ENCODE measurements at regions of chr4 and their contacts with region 1.

Region 1: GRCh38 chr4:140427106-140427961 is at the start of gene CLGN:
- DNase-seq: peak; percentile 91
- ATAC-seq: peak; percentile 95
- H3K4me3 Mint-ChIP-seq: peak within 1 kb of the TSS; percentile 82
- H3K27ac Mint-ChIP-seq: no peak within 1 kb of the TSS
- H3K4me1 Mint-ChIP-seq: peaks cover 11% of the 10 kb centered on the region
- H3K27me3 Mint-ChIP-seq: peaks cover 25% of the 10 kb centered on the region
- CTCF ChIP-seq: 0 out of 2 replicates have a peak, but pooled peaks have one; percentile 26
- total RNA-seq, gene CLGN: 2.3 to 3.4 TPM (median 3.0 TPM) in 3 replicates

Region 2: DNA sequence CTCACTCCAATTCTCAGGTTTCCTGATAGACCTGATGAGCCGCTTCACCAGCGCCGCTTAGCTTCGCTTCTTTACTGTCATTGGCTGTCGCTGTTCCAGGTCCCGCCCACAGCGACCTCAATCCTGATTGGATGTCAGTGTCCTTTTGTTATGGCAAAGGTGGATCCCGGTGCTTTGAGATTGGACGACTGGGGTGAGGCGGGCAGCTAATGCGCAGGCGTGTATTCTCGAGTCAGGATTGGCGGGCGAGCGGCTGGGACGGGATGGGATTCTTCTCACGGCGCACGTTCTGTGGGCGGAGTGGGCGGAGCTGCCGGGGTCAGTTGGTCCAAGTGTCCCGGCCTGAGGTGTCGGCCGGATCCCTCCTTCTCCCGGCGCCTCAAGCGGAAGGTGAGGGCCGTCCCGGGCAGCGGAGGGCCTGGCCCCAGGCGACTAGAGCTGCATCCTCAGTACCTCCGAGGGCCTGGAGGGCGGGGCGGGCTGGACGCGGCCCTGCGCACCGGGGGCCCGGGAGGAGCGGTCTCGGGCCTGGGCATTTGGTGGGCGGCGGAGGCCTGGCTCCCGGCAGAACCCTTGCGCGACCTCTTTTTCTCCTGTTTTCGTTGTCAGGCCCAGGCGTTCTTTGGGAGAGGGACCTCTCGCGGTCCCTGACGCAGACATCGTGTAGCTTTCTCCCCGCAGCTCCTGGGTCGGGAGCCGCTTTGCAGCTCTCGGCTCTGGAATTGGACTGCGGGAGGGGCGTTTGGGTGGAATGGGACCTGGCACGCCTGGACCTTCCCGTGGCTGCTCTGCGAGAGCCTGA is 53.8 kb before region 1 on chr4 and contains the start of gene SCOC:
- CTCF ChIA-PET with region 1: interaction called, 22 read pairs
- POLR2A ChIA-PET with region 1: interaction called, 11 read pairs
- DNase-seq: peak; percentile 99
- ATAC-seq: peak; percentile 95
- H3K4me3 Mint-ChIP-seq: no peak within 1 kb of the TSS
- H3K27ac Mint-ChIP-seq: peak within 1 kb of the TSS; percentile 91
- H3K4me1 Mint-ChIP-seq: peaks cover 22% of the 10 kb centered on the region
- H3K27me3 Mint-ChIP-seq: no peaks in the 10 kb centered on the region
- CTCF ChIP-seq: no peak
- total RNA-seq, gene SCOC: 33.0 to 37.3 TPM (median 33.6 TPM) in 3 replicates

Measured in WTC11 (cell line).